Cardiac septum (tissue), 1 donor: ENCODE measurements at regions of chr19 and their contacts with region 1.

Region 1: GRCh38 chr19:2648528-2648937 is 54.0 kb downstream of the GNG7 start:
- DNase-seq: peak; percentile 82

Region 2: GRCh38 chr19:2663920-2664571 is 15.5 kb after region 1 on chr19:
- intact Hi-C with region 1: no loop called
- DNase-seq: peak; percentile 86

Region 3: DNA sequence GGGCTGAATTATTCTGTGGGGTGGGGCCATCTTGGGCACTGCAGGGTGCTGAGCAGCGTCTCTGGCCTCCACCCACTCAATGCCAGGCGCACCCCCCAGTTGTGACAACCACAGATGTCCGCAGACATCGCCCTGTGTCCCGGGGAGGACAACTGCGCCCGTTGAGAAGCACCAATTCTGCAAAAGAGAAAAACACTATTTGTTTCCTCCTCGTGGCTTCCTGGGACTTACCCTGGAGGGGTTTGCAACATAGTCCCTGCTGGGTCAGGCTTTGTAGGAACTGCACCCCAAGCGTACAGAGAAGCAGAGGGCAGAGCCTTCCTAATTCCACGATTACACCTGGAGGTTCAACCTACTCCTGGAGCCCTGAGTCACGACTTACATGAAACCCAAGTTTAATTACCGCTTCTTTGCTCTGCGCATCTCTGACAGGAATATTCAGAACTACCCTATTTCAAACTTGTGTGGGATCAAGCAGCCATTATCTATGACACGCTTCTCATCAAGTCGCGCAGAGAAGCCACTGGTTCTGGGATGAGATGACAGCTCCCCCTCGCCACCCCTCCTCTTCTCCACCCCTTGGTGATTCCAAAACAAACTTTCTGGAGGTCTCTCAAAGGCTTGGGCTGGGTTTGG is 102.4 kb after region 1 on chr19:
- intact Hi-C with region 1: loop called (anchors 1 kb)
- DNase-seq: no peak

Region 4: DNA sequence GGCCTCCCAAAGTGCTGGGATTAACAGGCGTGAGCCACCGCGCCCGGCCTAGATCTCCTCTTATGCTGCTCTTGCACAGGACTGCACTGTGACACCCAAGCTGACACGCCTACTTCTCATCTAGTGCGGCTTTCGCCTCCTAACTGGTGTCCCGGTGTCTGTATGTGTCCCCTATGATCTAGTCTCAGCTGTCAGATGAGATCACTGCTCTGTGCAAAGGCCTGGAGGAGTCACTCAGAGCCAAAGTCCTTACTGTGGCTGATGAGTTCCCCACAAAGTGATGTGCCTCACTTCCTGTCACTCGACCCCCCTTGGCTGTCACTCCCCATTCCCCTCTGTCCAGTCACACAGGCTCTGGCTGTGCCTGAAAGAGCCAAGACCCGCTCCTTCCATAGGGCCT is 221.1 kb after region 1 on chr19:
- intact Hi-C with region 1: loop called (anchors 5 kb)
- DNase-seq: no peak